ENCODE measurements at regions of chr17 and their contacts with region 1.

Region 1: GRCh38 chr17:43846221-43846712 is 709 bp upstream of the CD300LG start:
- DNase-seq: peak; percentile 94
- H3K4me3 ChIP-seq: no peak overlapping the region
- H3K27ac ChIP-seq: no peak overlapping the region
- H3K4me1 ChIP-seq: peaks cover 5 to 31% (median 25%) of the 10 kb centered on the region in 4 donors
- H3K27me3 ChIP-seq: peaks cover 0 to 6% (median 0%) of the 10 kb centered on the region in 4 donors
- CTCF ChIP-seq: peak; percentile 96 to 100 (median 98)
- EP300 ChIP-seq: no peak
- POLR2A ChIP-seq: no peak

Region 2: GRCh38 chr17:43634591-43635125 is 211.6 kb before region 1 on chr17:
- intact Hi-C with region 1: no loop called
- DNase-seq: no peak
- H3K4me3 ChIP-seq: no peak overlapping the region
- H3K27ac ChIP-seq: peak overlapping the region in 2 of 4 donors; percentile 12 to 26
- H3K4me1 ChIP-seq: peaks cover 5 to 11% (median 8%) of the 10 kb centered on the region in 4 donors
- H3K27me3 ChIP-seq: no peaks in the 10 kb centered on the region
- CTCF ChIP-seq: no peak
- EP300 ChIP-seq: no peak
- POLR2A ChIP-seq: no peak

Region 3: DNA sequence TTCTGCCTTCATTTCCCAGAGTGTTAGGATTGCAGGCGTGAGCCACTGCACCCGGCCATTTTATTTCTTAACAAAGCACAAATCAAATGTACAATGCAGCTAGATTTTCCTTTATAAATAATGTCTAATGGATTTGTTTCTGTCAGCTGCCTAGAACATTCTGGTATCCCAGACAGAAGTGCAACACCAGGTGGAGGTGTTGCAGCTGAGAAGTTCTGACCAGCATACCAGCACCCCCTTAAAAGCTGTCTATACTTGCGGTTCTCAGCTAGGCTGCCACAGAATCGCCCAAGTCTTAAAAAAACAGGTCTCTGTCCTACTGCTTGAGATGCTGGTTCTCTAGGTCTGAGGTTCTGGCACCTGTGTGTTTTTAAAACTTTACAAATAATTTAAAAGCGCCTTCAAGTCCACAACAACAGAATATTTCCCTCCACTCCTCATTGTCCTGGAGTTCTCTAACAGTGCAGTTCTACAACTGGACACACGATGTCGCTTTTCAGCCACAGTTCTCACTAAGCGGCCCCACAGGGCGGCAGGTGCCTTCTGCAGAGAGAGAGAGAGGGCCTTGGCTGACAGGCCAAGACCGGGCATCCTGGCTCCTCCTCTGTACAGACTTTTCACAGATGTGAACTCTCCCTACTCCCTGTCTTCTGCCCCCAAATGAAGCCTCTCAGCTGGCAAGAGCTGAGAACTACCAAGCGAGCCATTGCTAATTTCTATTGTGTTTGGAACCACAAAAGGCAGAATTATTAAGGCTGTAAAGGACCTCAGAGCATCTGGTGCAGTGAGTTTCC is 152.0 kb before region 1 on chr17:
- intact Hi-C with region 1: loop called (anchors 5 kb)
- DNase-seq: no peak
- H3K4me3 ChIP-seq: no peak overlapping the region
- H3K27ac ChIP-seq: no peak overlapping the region
- H3K4me1 ChIP-seq: peaks cover 13 to 15% (median 14%) of the 10 kb centered on the region in 4 donors
- H3K27me3 ChIP-seq: peaks cover 0 to 3% (median 0%) of the 10 kb centered on the region in 4 donors
- CTCF ChIP-seq: peak; percentile 94 to 98 (median 97)
- EP300 ChIP-seq: no peak
- POLR2A ChIP-seq: no peak

Region 4: DNA sequence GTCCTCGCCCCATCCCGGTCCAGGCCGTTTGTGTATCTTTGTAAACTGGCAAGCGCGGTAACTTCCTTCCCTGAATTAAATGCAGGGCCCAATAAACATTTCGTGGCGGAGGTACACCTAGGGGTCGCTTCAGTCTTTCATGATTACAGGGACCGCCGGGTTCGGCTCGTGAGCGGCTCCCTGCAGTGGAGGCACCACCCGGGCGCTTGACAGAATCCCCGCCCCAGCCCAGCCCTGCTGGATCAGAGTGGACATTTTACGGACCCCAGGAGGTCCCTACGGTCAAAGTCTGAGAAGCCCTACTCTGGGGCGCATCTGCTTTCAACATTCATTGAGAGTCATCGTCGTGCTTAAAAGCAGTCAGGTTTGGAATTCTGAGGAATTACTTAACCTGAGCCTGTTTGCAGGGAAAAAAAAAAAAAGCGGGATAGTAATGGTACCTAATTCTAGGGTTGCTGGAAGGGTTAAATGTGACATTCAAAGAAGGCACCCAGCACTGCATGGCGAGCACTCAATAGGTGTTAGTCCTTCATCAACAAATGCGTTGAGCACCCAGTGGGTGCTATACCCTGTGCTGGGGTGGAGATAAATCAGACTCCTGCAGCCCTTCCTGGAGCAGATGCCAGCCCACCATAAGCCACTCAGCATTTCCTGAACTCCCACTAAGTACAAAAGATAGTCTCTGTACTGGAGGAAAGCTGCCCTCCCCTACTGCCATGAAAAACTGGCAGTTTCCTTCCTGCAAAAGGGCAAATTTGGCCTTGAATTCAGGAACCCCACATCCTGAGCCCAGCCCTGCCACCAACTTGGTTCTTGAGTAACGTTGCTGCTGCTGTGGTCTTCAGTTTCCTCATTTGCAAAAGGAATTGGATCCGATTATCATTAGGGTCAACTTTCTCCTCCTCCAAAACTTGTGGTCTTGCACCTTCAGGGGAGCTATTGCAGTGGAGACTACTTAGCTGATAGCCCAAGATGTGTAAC is 66.8 kb before region 1 on chr17:
- intact Hi-C with region 1: loop called (anchors 5 kb)
- DNase-seq: no peak
- H3K4me3 ChIP-seq: peak overlapping the region; percentile 87 to 99 (median 91)
- H3K27ac ChIP-seq: peak overlapping the region; percentile 97 to 100 (median 100)
- H3K4me1 ChIP-seq: peaks cover 29 to 46% (median 39%) of the 10 kb centered on the region in 4 donors
- H3K27me3 ChIP-seq: no peaks in the 10 kb centered on the region
- CTCF ChIP-seq: peak in 2 of 3 experiments; percentile 12 to 27
- EP300 ChIP-seq: no peak
- POLR2A ChIP-seq: no peak

Measured in esophagus muscularis mucosa (tissue), 4 donors.